Breast epithelium (tissue), 4 donors: ENCODE measurements at regions of chr20 and their contacts with region 1.

Region 1: GRCh38 chr20:19889011-19889953 is 127.9 kb upstream of the NAA20 start:
- DNase-seq: peak; percentile 60 to 64
- H3K4me3 ChIP-seq: peak overlapping the region; percentile 27 to 62 (median 46)
- H3K27ac ChIP-seq: peak overlapping the region; percentile 94 to 95
- H3K4me1 ChIP-seq: peaks cover 18 to 36% of the 10 kb centered on the region in 2 donors
- H3K27me3 ChIP-seq: no peaks in the 10 kb centered on the region
- CTCF ChIP-seq: no peak
- POLR2A ChIP-seq: peak; percentile 53

Region 2: DNA sequence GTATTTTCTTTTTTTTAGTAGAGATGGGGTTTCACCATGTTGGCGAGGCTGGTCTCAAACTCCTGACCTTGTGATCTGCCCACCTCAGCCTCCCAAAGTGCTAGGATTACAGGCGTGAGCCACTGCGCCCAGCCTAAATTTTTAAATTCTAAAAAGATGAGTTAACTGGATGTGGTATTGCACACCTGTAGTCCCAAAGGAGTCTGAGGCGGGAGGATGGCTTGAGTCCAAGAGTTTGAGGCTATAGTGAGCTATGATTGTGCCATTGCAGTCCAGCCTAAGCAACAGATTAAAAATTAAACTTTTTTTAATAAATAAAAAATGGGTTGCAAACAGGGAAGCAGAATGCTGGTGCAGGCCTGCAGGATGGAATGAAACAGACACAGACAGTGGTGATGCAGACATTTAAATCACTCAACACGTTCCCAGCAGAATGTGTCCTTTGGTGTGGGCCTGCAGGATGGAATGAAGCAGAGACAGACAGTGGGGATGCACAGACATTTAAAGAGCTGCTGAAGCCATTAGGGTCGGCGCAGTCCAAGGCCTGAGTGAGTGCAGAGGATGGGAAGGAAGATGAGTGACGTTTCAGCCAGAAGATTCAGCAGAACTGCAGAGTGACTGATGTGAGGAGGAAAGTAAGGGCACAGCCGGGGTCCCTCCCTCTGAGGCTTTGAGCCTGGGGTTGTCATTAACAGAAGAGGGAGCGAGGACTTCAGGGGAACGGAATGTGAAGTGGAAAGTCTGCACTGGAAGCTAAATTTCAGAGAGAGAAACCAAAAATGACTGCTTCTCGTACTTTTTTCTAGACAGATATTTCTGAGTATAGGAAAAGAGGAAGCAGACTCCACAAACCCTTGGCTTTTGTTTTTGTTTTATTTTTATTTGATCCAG is 13.7 kb before region 1 on chr20:
- intact Hi-C with region 1: no loop called
- DNase-seq: no peak
- H3K4me3 ChIP-seq: no peak overlapping the region
- H3K27ac ChIP-seq: peak overlapping the region in 1 of 2 donors; percentile 46
- H3K4me1 ChIP-seq: no peaks in the 10 kb centered on the region
- H3K27me3 ChIP-seq: no peaks in the 10 kb centered on the region
- CTCF ChIP-seq: no peak
- POLR2A ChIP-seq: no peak

Region 3: GRCh38 chr20:19974626-19975435 is 85.5 kb after region 1 on chr20:
- intact Hi-C with region 1: loop called (anchors 10 kb)
- DNase-seq: peak; percentile 79 to 82
- H3K4me3 ChIP-seq: peak overlapping the region; percentile 57 to 74 (median 64)
- H3K27ac ChIP-seq: peak overlapping the region; percentile 91 to 94
- H3K4me1 ChIP-seq: peaks cover 2 to 31% of the 10 kb centered on the region in 2 donors
- H3K27me3 ChIP-seq: no peaks in the 10 kb centered on the region
- CTCF ChIP-seq: no peak
- POLR2A ChIP-seq: no peak

Region 4: GRCh38 chr20:20003031-20003954 is 114.0 kb after region 1 on chr20:
- intact Hi-C with region 1: loop called (anchors 10 kb)
- DNase-seq: peak in 1 of 2 donors; percentile 83
- H3K4me3 ChIP-seq: peak overlapping the region; percentile 9 to 45 (median 35)
- H3K27ac ChIP-seq: peak overlapping the region; percentile 83 to 87
- H3K4me1 ChIP-seq: no peaks in the 10 kb centered on the region
- H3K27me3 ChIP-seq: no peaks in the 10 kb centered on the region
- CTCF ChIP-seq: no peak
- POLR2A ChIP-seq: no peak